Activated CD4-positive, alpha-beta T cell treated with anti-CD3 and anti-CD28 coated beads for 36 hours (primary cell): ENCODE measurements at regions of chr4 and their contacts with region 1.

Region 1: GRCh38 chr4:83197555-83198235 is 83.2 kb upstream of the PLAC8 start:
- DNase-seq: no peak
- ATAC-seq: no peak
- H3K4me3 Mint-ChIP-seq: no peak overlapping the region
- H3K27ac Mint-ChIP-seq: no peak overlapping the region
- H3K4me1 Mint-ChIP-seq: no peaks in the 10 kb centered on the region
- H3K27me3 Mint-ChIP-seq: no peaks in the 10 kb centered on the region

Region 2: GRCh38 chr4:83150653-83151330 is 46.9 kb before region 1 on chr4:
- CTCF ChIA-PET with region 1: no interaction called
- POLR2A ChIA-PET with region 1: no interaction called
- intact Hi-C with region 1: loop called in 1 of 2 experiments (anchors 5 kb)
- DNase-seq: no peak
- ATAC-seq: no peak
- H3K4me3 Mint-ChIP-seq: no peak overlapping the region
- H3K27ac Mint-ChIP-seq: no peak overlapping the region
- H3K4me1 Mint-ChIP-seq: peaks cover 15% of the 10 kb centered on the region
- H3K27me3 Mint-ChIP-seq: no peaks in the 10 kb centered on the region

Region 3: GRCh38 chr4:83369831-83370639 is 172.3 kb after region 1 on chr4:
- CTCF ChIA-PET with region 1: no interaction called
- POLR2A ChIA-PET with region 1: no interaction called
- intact Hi-C with region 1: no loop called
- DNase-seq: no peak
- ATAC-seq: no peak
- H3K4me3 Mint-ChIP-seq: no peak overlapping the region
- H3K27ac Mint-ChIP-seq: no peak overlapping the region
- H3K4me1 Mint-ChIP-seq: no peaks in the 10 kb centered on the region
- H3K27me3 Mint-ChIP-seq: peaks cover 2% of the 10 kb centered on the region

Region 4: GRCh38 chr4:84179413-84179812 is 981.7 kb after region 1 on chr4:
- CTCF ChIA-PET with region 1: no interaction called
- POLR2A ChIA-PET with region 1: no interaction called
- intact Hi-C with region 1: no loop called
- DNase-seq: no peak
- ATAC-seq: no peak
- H3K4me3 Mint-ChIP-seq: no peak overlapping the region
- H3K27ac Mint-ChIP-seq: no peak overlapping the region
- H3K4me1 Mint-ChIP-seq: no peaks in the 10 kb centered on the region
- H3K27me3 Mint-ChIP-seq: no peaks in the 10 kb centered on the region